ENCODE measurements at regions of chr3 and their contacts with region 1.

Region 1: GRCh38 chr3:53195602-53196574 is 34.9 kb downstream of the PRKCD start:
- DNase-seq: peak; percentile 76
- ATAC-seq: peak; percentile 72
- H3K4me3 Mint-ChIP-seq: no peak overlapping the region
- H3K27ac Mint-ChIP-seq: no peak overlapping the region
- H3K4me1 Mint-ChIP-seq: peaks cover 6% of the 10 kb centered on the region
- H3K27me3 Mint-ChIP-seq: no peaks in the 10 kb centered on the region

Region 2: GRCh38 chr3:52428151-52429005 is 767.5 kb before region 1 on chr3:
- CTCF ChIA-PET with region 1: no interaction called
- POLR2A ChIA-PET with region 1: no interaction called
- intact Hi-C with region 1: no loop called
- DNase-seq: peak; percentile 61
- ATAC-seq: peak; percentile 90
- H3K4me3 Mint-ChIP-seq: no peak overlapping the region
- H3K27ac Mint-ChIP-seq: no peak overlapping the region
- H3K4me1 Mint-ChIP-seq: no peaks in the 10 kb centered on the region
- H3K27me3 Mint-ChIP-seq: no peaks in the 10 kb centered on the region

Region 3: GRCh38 chr3:52851348-52851747 is 344.5 kb before region 1 on chr3:
- CTCF ChIA-PET with region 1: no interaction called
- POLR2A ChIA-PET with region 1: no interaction called
- intact Hi-C with region 1: loop called (anchors 2 to 10 kb)
- DNase-seq: peak; percentile 50
- ATAC-seq: peak; percentile 88
- H3K4me3 Mint-ChIP-seq: no peak overlapping the region
- H3K27ac Mint-ChIP-seq: no peak overlapping the region
- H3K4me1 Mint-ChIP-seq: no peaks in the 10 kb centered on the region
- H3K27me3 Mint-ChIP-seq: no peaks in the 10 kb centered on the region

Region 4: GRCh38 chr3:53130179-53131061 is 65.5 kb before region 1 on chr3 and contains the start of gene RFT1:
- CTCF ChIA-PET with region 1: interaction called, 69 read pairs
- POLR2A ChIA-PET with region 1: interaction called, 3 read pairs
- intact Hi-C with region 1: loop called (anchors 1 kb)
- DNase-seq: peak; percentile 99
- ATAC-seq: peak; percentile 93
- H3K4me3 Mint-ChIP-seq: peak within 1 kb of the TSS; percentile 98
- H3K27ac Mint-ChIP-seq: peak within 1 kb of the TSS; percentile 95
- H3K4me1 Mint-ChIP-seq: peaks cover 22% of the 10 kb centered on the region
- H3K27me3 Mint-ChIP-seq: no peaks in the 10 kb centered on the region
- total RNA-seq, gene RFT1: 39.8 to 49.0 TPM

Region 5: DNA sequence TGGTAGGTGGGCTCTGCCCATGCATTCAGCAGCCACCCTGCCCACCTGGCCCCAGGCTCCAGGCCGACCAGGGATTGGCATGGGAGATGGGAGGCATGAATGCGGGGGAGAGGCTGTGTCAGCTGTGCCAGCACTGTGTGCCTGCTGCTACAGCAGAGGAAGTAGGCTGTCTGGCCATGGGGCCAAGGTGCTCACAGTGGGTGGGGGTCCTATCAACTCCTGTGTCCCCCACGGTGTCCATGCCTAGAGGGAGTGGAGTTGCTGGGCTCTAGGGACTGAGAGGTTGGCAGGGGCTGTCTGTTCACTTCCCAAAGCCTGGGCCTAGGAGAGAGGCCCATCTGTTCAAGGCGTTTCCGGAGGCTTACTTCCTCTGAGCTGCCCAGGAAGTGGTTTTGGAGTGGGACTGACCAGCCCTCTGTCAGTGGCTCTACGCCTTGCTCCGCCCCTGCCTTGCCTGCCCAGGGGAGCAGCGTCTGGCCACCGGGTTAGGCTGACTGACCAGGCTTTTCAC is 29.1 kb before region 1 on chr3:
- CTCF ChIA-PET with region 1: interaction called, 12 read pairs
- POLR2A ChIA-PET with region 1: no interaction called
- intact Hi-C with region 1: loop called (anchors 1 to 5 kb)
- DNase-seq: no peak
- ATAC-seq: no peak
- H3K4me3 Mint-ChIP-seq: no peak overlapping the region
- H3K27ac Mint-ChIP-seq: no peak overlapping the region
- H3K4me1 Mint-ChIP-seq: peaks cover 42% of the 10 kb centered on the region
- H3K27me3 Mint-ChIP-seq: no peaks in the 10 kb centered on the region

Measured in activated CD4-positive, alpha-beta T cell treated with anti-CD3 and anti-CD28 coated beads for 36 hours (primary cell).